ENCODE measurements at regions of chr19 and their contacts with region 1.

Region 1: GRCh38 chr19:52942386-52943133 is 19.3 kb upstream of the ZNF888 start:
- DNase-seq: peak; percentile 85
- H3K4me3 ChIP-seq: peak overlapping the region; percentile 76 to 94 (median 87)
- H3K27ac ChIP-seq: peak overlapping the region; percentile 65
- H3K4me1 ChIP-seq: no peaks in the 10 kb centered on the region
- H3K27me3 ChIP-seq: no peaks in the 10 kb centered on the region
- CTCF ChIP-seq: no peak
- POLR2A ChIP-seq: peak; percentile 60

Region 2: GRCh38 chr19:52853880-52854279 is 88.7 kb before region 1 on chr19:
- CTCF ChIA-PET with region 1: no interaction called
- POLR2A ChIA-PET with region 1: no interaction called
- dilution Hi-C with region 1: no loop called
- intact Hi-C with region 1: loop called (anchors 5 kb)
- DNase-seq: no peak
- H3K4me3 ChIP-seq: no peak overlapping the region
- H3K27ac ChIP-seq: no peak overlapping the region
- H3K4me1 ChIP-seq: peaks cover 3% of the 10 kb centered on the region
- H3K27me3 ChIP-seq: no peaks in the 10 kb centered on the region
- CTCF ChIP-seq: no peak
- POLR2A ChIP-seq: no peak

Region 3: GRCh38 chr19:52897144-52897935 is 45.2 kb before region 1 on chr19 and contains the start of gene ZNF320:
- CTCF ChIA-PET with region 1: no interaction called
- POLR2A ChIA-PET with region 1: no interaction called
- dilution Hi-C with region 1: no loop called
- intact Hi-C with region 1: loop called (anchors 1 kb)
- DNase-seq: peak; percentile 96
- H3K4me3 ChIP-seq: peak within 1 kb of the TSS; percentile 83 to 99 (median 97)
- H3K27ac ChIP-seq: peak within 1 kb of the TSS; percentile 89
- H3K4me1 ChIP-seq: peaks cover 6% of the 10 kb centered on the region
- H3K27me3 ChIP-seq: no peaks in the 10 kb centered on the region
- CTCF ChIP-seq: no peak
- POLR2A ChIP-seq: peak; percentile 69
- total RNA-seq, gene ZNF320: 10.9 and 11.1 TPM in 2 replicates

Region 4: GRCh38 chr19:52922841-52923777 is 19.5 kb before region 1 on chr19 and contains the start of gene ZNF888:
- CTCF ChIA-PET with region 1: no interaction called
- POLR2A ChIA-PET with region 1: no interaction called
- dilution Hi-C with region 1: no loop called
- intact Hi-C with region 1: loop called (anchors 1 kb)
- DNase-seq: peak; percentile 86
- H3K4me3 ChIP-seq: peak within 1 kb of the TSS; percentile 46 to 81 (median 51)
- H3K27ac ChIP-seq: peak within 1 kb of the TSS; percentile 65
- H3K4me1 ChIP-seq: no peaks in the 10 kb centered on the region
- H3K27me3 ChIP-seq: no peaks in the 10 kb centered on the region
- CTCF ChIP-seq: no peak
- POLR2A ChIP-seq: peak; percentile 77
- total RNA-seq, gene ZNF888: 2.9 and 3.9 TPM in 2 replicates

Region 5: GRCh38 chr19:52962394-52963246 is 20.1 kb after region 1 on chr19 and contains the start of gene ZNF816:
- CTCF ChIA-PET with region 1: no interaction called
- POLR2A ChIA-PET with region 1: no interaction called
- dilution Hi-C with region 1: no loop called
- intact Hi-C with region 1: loop called (anchors 1 kb)
- DNase-seq: peak; percentile 96
- H3K4me3 ChIP-seq: peak within 1 kb of the TSS; percentile 74 to 83 (median 77)
- H3K27ac ChIP-seq: peak within 1 kb of the TSS; percentile 56
- H3K4me1 ChIP-seq: peaks cover 4% of the 10 kb centered on the region
- H3K27me3 ChIP-seq: no peaks in the 10 kb centered on the region
- CTCF ChIP-seq: no peak
- POLR2A ChIP-seq: peak; percentile 87
- total RNA-seq, gene ZNF816: 4.9 and 5.3 TPM in 2 replicates

Region 6: GRCh38 chr19:53086949-53087348 is 144.4 kb after region 1 on chr19:
- CTCF ChIA-PET with region 1: no interaction called
- POLR2A ChIA-PET with region 1: no interaction called
- dilution Hi-C with region 1: no loop called
- intact Hi-C with region 1: loop called (anchors 5 kb)
- DNase-seq: peak; percentile 94
- H3K4me3 ChIP-seq: no peak overlapping the region
- H3K27ac ChIP-seq: peak overlapping the region; percentile 92
- H3K4me1 ChIP-seq: peaks cover 23% of the 10 kb centered on the region
- H3K27me3 ChIP-seq: no peaks in the 10 kb centered on the region
- CTCF ChIP-seq: no peak
- POLR2A ChIP-seq: peak; percentile 50

Measured in endothelial cell of umbilical vein (primary cell).